ENCODE measurements at regions of chr1 and their contacts with region 1.

Region 1: DNA sequence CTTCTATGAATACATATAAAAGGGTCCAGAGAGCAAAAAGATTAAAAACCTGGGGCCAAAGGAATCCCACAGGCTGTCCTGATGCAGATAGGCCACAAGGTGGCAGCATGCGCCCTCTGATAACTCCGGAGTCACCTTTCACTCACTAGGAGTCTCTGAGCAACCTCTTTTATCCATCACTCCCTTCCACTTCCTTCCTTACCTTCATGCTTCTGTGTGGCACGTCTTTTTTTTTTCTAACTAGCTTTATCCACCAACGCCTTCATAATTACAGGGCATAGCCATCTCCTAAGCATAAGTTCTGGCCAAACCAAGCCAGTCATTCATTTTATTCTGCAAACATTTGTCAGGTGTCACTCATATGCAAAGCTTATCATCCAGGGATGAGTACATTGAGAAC is 3.9 kb upstream of the PGLYRP4 start:
- DNase-seq: peak; percentile 65 to 74 (median 70)
- ATAC-seq: peak; percentile 81 to 87 (median 84)
- H3K4me3 ChIP-seq: no peak overlapping the region
- H3K27ac ChIP-seq: no peak overlapping the region
- H3K4me1 ChIP-seq: peaks cover 0 to 3% (median 0%) of the 10 kb centered on the region in 4 donors
- H3K27me3 ChIP-seq: no peaks in the 10 kb centered on the region
- CTCF ChIP-seq: peak; percentile 83 to 98 (median 96)
- POLR2A ChIP-seq: no peak

Region 2: DNA sequence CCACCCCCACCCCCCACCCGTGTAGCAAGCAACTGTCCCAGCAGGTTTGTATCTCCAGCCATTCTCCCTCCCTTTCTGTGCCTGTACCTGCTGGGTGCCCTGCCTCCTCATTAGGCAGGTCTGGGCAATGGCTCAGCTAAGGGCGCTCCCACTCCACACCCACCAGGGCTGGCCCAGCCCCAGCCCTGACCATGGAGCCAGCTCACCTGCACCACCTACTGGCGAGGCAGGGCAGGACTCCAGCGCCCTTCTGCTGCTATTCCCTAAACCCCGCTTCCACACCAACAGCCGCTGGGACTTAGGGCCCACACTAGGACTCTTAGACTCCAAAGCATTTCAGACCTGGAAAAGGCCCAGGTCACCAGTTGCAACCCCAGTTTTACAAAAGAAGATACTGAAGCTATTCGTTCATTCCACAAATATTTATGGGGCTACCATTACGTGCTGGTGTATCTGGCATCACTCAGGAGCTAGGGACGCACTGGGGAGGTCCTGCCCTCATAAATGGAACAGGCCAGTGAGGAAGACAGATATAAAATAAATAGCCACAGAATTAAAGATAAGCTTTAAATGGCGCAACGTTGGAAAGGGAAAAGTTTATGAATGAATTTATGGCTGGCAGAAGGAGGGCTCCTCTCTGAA is 63.8 kb before region 1 on chr1:
- intact Hi-C with region 1: no loop called
- DNase-seq: no peak
- ATAC-seq: peak in 3 of 4 donors; percentile 39 to 66 (median 42)
- H3K4me3 ChIP-seq: no peak overlapping the region
- H3K27ac ChIP-seq: no peak overlapping the region
- H3K4me1 ChIP-seq: no peaks in the 10 kb centered on the region
- H3K27me3 ChIP-seq: no peaks in the 10 kb centered on the region
- CTCF ChIP-seq: peak; percentile 9 to 49 (median 30)
- POLR2A ChIP-seq: no peak

Region 3: GRCh38 chr1:153404768-153405167 is 52.2 kb after region 1 on chr1:
- intact Hi-C with region 1: loop called in 1 of 2 experiments (anchors 10 kb)
- DNase-seq: peak; percentile 60 to 75 (median 67)
- ATAC-seq: peak; percentile 81 to 84 (median 83)
- H3K4me3 ChIP-seq: no peak overlapping the region
- H3K27ac ChIP-seq: no peak overlapping the region
- H3K4me1 ChIP-seq: no peaks in the 10 kb centered on the region
- H3K27me3 ChIP-seq: no peaks in the 10 kb centered on the region
- CTCF ChIP-seq: peak; percentile 51 to 61 (median 59)
- POLR2A ChIP-seq: no peak

Region 4: DNA sequence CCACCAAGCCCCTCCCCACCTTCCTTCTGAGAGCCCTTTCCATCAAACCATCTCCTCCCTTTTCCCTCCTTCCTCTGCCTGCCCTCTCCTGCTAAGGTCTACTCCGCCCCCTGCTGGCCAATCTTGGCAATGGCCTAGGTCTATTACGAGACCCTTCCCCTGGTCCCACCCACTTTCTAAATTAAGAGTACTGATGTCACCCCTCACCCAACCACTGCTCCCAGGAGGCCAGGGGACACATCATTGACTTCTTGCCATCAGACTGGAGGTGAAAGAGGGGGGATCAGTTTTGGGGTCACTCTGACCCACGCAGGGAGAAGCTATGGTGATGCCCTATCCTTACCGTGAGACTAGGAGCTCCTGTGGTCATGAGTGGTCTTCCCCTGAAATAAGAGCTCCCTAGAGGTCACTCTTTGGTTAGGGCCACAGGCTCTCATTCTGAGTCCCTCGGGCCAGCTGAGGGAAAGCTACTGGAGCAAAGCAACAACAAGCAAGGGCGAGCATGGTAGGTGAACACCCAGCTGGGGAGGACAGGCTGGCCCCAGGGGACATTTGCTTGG is 142.5 kb after region 1 on chr1:
- intact Hi-C with region 1: loop called (anchors 5 kb)
- DNase-seq: peak; percentile 73 to 74 (median 73)
- ATAC-seq: peak; percentile 70 to 77 (median 71)
- H3K4me3 ChIP-seq: no peak overlapping the region
- H3K27ac ChIP-seq: no peak overlapping the region
- H3K4me1 ChIP-seq: no peaks in the 10 kb centered on the region
- H3K27me3 ChIP-seq: no peaks in the 10 kb centered on the region
- CTCF ChIP-seq: peak; percentile 82 to 91 (median 89)
- POLR2A ChIP-seq: no peak

Measured in right lobe of liver (tissue), 6 donors.